CD14-positive monocyte (primary cell): ENCODE measurements at regions of chr9 and their contacts with region 1.

Region 1: GRCh38 chr9:133335878-133336811 is at the start of gene SURF6:
- DNase-seq: peak; percentile 80 to 87 (median 85)
- H3K4me3 ChIP-seq: peak within 1 kb of the TSS; percentile 64 to 92 (median 89)
- H3K4me3 Mint-ChIP-seq: peak within 1 kb of the TSS; percentile 95 to 98
- H3K27ac ChIP-seq: peak within 1 kb of the TSS; percentile 64 to 90
- H3K27ac Mint-ChIP-seq: peak within 1 kb of the TSS; percentile 87 to 95 (median 94)
- H3K4me1 ChIP-seq: peaks cover 46 to 64% of the 10 kb centered on the region in 2 donors
- H3K4me1 Mint-ChIP-seq: peaks cover 58% of the 10 kb centered on the region
- H3K27me3 ChIP-seq: no peaks in the 10 kb centered on the region
- H3K27me3 Mint-ChIP-seq: no peaks in the 10 kb centered on the region
- CTCF ChIP-seq: no peak
- polyA plus RNA-seq, gene SURF6: 0.75 to 12.9 (median 2.9) TPM

Region 2: DNA sequence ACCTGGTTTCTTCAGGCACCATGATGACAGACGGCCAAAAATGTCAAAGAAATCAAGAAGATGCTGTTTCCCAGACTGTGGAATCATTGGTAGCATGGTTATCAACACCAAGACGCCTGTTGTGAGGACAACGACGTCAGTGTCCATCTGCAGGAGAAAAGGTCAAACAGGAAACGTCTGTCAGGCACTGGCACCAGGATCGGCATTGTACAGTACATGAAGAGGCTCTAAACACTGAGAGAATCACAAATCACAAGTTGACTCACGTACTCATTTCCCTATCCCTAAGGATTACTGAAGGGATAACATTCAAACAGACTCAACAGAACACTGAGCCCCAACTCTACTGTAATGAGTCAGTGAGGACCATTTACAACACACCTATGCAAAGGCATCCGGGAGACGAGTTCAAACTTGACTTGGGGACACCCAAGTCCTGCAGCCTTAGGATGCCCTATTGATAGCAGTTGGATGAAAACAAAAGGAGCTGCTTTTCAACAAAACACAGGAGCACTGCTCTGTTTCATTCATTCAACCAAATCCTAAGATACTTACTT is 412.7 kb before region 1 on chr9:
- intact Hi-C with region 1: no loop called
- DNase-seq: no peak
- H3K4me3 ChIP-seq: no peak overlapping the region
- H3K4me3 Mint-ChIP-seq: no peak overlapping the region
- H3K27ac ChIP-seq: no peak overlapping the region
- H3K27ac Mint-ChIP-seq: no peak overlapping the region
- H3K4me1 ChIP-seq: no peaks in the 10 kb centered on the region
- H3K4me1 Mint-ChIP-seq: no peaks in the 10 kb centered on the region
- H3K27me3 ChIP-seq: no peaks in the 10 kb centered on the region
- H3K27me3 Mint-ChIP-seq: no peaks in the 10 kb centered on the region
- CTCF ChIP-seq: no peak

Region 3: DNA sequence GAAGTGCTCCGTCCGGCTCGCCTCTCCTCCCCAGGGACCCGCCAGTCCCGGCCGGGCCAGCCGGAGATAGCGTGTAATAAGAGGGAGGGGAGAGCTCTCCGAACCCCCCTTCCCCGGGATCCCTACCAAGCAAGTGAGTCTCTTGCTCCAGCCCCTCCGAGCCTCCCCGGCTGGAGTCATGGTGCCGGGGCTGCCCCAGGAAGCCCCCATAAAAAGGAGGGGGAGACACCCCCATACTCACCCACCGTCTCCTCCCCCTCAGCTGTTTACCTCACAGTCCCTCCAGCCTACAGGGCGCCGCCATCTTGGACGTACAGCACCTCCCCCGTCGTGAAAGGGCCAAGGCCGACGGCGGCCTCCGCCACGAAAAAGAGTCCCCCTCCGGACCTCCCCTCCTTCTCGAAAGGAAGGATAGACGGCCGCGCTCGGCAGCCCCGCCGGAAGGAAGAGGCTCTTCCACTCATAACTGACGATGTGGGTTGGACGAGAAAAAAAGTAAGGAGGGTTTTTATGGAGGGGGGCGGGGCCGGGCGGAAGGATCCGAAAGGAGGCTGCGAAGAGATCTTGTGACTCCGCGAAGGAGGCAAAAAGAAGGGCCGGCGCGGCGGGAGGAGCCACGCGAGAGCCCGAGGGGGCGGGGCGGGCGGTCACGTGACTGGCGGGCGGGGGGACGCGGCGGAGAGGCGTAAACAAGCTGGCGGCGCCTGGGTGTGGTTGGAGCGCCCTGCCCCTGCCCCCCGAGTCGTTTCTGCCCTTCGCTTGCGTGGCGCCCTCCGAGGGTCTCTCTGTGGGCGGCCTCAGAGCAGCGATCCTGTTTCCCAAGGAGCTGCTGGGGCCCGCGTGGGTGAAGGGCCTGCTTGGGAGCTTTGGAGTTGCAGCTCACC is 391.6 kb before region 1 on chr9 and contains the start of gene TSC1:
- intact Hi-C with region 1: loop called in 1 of 2 experiments (anchors 10 kb)
- DNase-seq: peak; percentile 86 to 95 (median 92)
- H3K4me3 ChIP-seq: peak within 1 kb of the TSS; percentile 86 to 99 (median 99)
- H3K4me3 Mint-ChIP-seq: peak within 1 kb of the TSS; percentile 85 to 98
- H3K27ac ChIP-seq: peak within 1 kb of the TSS; percentile 93 to 99
- H3K27ac Mint-ChIP-seq: peak within 1 kb of the TSS; percentile 99 to 100 (median 100)
- H3K4me1 ChIP-seq: peaks cover 16 to 20% of the 10 kb centered on the region in 2 donors
- H3K4me1 Mint-ChIP-seq: peaks cover 20% of the 10 kb centered on the region
- H3K27me3 ChIP-seq: no peaks in the 10 kb centered on the region
- H3K27me3 Mint-ChIP-seq: peaks cover 0 to 3% (median 0%) of the 10 kb centered on the region in 3 donors
- CTCF ChIP-seq: no peak
- polyA plus RNA-seq, gene TSC1: 3.3 to 43.0 (median 5.8) TPM

Region 4: GRCh38 chr9:133184962-133185361 is 151.2 kb before region 1 on chr9:
- intact Hi-C with region 1: loop called in 1 of 2 experiments (anchors 10 kb)
- DNase-seq: peak; percentile 37 to 44 (median 42)
- H3K4me3 ChIP-seq: no peak overlapping the region
- H3K4me3 Mint-ChIP-seq: peak overlapping the region in 1 of 2 donors; percentile 30
- H3K27ac ChIP-seq: no peak overlapping the region
- H3K27ac Mint-ChIP-seq: no peak overlapping the region
- H3K4me1 ChIP-seq: peaks cover 6 to 15% of the 10 kb centered on the region in 2 donors
- H3K4me1 Mint-ChIP-seq: peaks cover 15% of the 10 kb centered on the region
- H3K27me3 ChIP-seq: peaks cover 0 to 9% of the 10 kb centered on the region in 2 donors
- H3K27me3 Mint-ChIP-seq: peaks cover 7 to 16% (median 15%) of the 10 kb centered on the region in 3 donors
- CTCF ChIP-seq: peak; percentile 43

Region 5: DNA sequence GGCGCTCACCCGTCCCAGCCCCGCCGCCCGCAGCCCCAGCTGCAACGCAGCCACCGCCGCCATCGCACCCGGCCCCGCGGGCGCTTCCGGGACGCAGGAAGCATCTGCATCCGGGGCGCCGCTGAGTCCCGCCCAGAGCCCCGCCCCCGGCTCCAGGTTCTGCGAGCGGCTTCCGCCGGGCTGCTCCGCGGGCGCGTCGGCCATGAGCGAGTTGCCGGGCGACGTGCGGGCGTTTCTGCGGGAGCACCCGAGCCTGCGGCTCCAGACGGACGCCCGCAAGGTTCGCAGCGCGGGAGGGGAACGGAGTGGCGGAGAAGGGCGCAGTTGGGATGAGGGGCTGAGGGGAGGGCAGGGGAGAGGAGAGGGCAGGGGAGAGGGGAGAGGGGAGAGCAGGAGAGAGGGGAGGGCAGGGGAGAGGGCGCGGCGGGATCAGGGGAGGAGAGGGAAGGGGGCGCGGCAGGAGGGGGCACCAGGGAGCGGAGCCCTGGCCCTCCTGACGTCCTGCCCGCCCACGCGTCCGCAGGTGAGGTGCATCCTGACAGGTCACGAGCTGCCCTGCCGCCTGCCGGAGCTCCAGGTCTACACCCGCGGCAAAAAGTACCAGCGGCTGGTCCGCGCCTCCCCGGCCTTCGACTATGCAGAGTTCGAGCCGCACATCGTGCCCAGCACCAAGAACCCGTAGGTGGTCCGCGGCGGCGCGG is 20.4 kb after region 1 on chr9 and contains the starts of genes SURF1 and SURF2:
- intact Hi-C with region 1: no loop called
- DNase-seq: peak; percentile 72 to 82 (median 76)
- H3K4me3 ChIP-seq: peak within 1 kb of the TSS; percentile 70 to 89 (median 71)
- H3K4me3 Mint-ChIP-seq: peak within 1 kb of the TSS; percentile 83 to 89
- H3K27ac ChIP-seq: peak within 1 kb of the TSS; percentile 38 to 75
- H3K27ac Mint-ChIP-seq: peak within 1 kb of the TSS; percentile 33 to 91 (median 86)
- H3K4me1 ChIP-seq: peaks cover 29 to 35% of the 10 kb centered on the region in 2 donors
- H3K4me1 Mint-ChIP-seq: peaks cover 42% of the 10 kb centered on the region
- H3K27me3 ChIP-seq: no peaks in the 10 kb centered on the region
- H3K27me3 Mint-ChIP-seq: peaks cover 0 to 2% (median 2%) of the 10 kb centered on the region in 3 donors
- CTCF ChIP-seq: no peak
- polyA plus RNA-seq, gene SURF1: 60.5 to 140 (median 98.4) TPM
- polyA plus RNA-seq, gene SURF2: 17.5 to 24.7 (median 17.6) TPM

Region 6: GRCh38 chr9:133375724-133376654 is 39.8 kb after region 1 on chr9 and contains the starts of genes STKLD1 and SURF4:
- intact Hi-C with region 1: loop called in 1 of 2 experiments (anchors 2 kb)
- DNase-seq: peak; percentile 89 to 93 (median 90)
- H3K4me3 ChIP-seq: peak within 1 kb of the TSS; percentile 65 to 95 (median 86)
- H3K4me3 Mint-ChIP-seq: peak within 1 kb of the TSS; percentile 94 to 97
- H3K27ac ChIP-seq: peak within 1 kb of the TSS; percentile 71 to 83
- H3K27ac Mint-ChIP-seq: peak within 1 kb of the TSS; percentile 89 to 96 (median 94)
- H3K4me1 ChIP-seq: peaks cover 21 to 56% of the 10 kb centered on the region in 2 donors
- H3K4me1 Mint-ChIP-seq: peaks cover 54% of the 10 kb centered on the region
- H3K27me3 ChIP-seq: no peaks in the 10 kb centered on the region
- H3K27me3 Mint-ChIP-seq: peaks cover 0 to 5% (median 3%) of the 10 kb centered on the region in 3 donors
- CTCF ChIP-seq: no peak
- polyA plus RNA-seq, gene STKLD1: 0.27 TPM in 1 of 3 donors, not detected in the others
- polyA plus RNA-seq, gene SURF4: 61.4 to 175 (median 157) TPM

Region 7: DNA sequence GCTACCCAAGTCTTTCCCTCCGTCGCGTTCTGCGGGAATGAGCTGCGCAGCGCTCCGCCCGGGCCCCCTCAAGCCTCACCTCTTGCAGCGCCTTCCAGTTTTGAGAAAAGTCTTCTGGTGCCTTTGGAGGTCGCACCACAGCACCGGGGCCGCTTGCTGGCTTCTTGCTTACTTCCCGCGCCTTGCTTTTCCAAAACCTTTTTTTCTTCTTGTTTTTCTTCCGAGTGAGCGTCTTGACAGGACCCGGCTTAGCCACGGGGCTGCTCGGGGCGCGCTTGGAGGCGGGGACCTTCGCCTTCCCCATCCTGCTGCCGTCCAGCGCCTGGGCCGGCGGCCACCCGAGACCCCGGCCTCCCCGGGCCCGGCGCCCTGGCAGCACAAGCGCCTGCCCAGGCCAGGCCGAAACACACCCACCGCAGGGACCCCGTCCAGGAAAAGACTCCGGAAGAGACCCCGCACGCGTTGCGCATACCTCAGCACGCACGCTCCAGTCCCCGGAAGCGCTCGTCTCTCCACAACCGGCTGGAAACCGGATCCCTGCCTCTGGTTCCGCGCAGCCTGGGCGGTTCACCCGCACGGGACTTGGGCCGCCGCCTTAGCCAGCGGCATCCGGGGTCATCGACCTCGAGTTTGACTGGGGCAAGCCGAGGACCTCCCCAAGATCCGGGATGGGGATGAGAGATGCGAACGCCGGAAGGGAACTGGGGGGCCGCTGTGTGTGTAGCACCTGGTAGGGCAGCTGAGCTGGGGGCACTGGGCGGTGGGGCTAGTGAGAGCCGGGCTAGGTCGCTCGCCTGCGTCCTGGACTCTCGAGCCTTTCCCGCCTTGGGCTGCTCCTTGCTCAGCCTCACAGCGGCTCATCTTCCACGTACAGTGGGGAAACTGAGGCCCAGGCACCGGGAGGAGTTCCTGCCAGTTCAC is 81.7 kb after region 1 on chr9 and contains the start of gene REXO4:
- intact Hi-C with region 1: loop called in 1 of 2 experiments (anchors 5 kb)
- DNase-seq: peak; percentile 75 to 78 (median 77)
- H3K4me3 ChIP-seq: peak within 1 kb of the TSS; percentile 58 to 94 (median 83)
- H3K4me3 Mint-ChIP-seq: peak within 1 kb of the TSS; percentile 92 to 96
- H3K27ac ChIP-seq: peak within 1 kb of the TSS; percentile 75 to 82
- H3K27ac Mint-ChIP-seq: peak within 1 kb of the TSS; percentile 73 to 93 (median 86)
- H3K4me1 ChIP-seq: peaks cover 21 to 26% of the 10 kb centered on the region in 2 donors
- H3K4me1 Mint-ChIP-seq: peaks cover 34% of the 10 kb centered on the region
- H3K27me3 ChIP-seq: no peaks in the 10 kb centered on the region
- H3K27me3 Mint-ChIP-seq: peaks cover 0 to 4% (median 1%) of the 10 kb centered on the region in 3 donors
- CTCF ChIP-seq: no peak
- polyA plus RNA-seq, gene REXO4: 3.0 to 11.0 (median 4.2) TPM

Region 8: DNA sequence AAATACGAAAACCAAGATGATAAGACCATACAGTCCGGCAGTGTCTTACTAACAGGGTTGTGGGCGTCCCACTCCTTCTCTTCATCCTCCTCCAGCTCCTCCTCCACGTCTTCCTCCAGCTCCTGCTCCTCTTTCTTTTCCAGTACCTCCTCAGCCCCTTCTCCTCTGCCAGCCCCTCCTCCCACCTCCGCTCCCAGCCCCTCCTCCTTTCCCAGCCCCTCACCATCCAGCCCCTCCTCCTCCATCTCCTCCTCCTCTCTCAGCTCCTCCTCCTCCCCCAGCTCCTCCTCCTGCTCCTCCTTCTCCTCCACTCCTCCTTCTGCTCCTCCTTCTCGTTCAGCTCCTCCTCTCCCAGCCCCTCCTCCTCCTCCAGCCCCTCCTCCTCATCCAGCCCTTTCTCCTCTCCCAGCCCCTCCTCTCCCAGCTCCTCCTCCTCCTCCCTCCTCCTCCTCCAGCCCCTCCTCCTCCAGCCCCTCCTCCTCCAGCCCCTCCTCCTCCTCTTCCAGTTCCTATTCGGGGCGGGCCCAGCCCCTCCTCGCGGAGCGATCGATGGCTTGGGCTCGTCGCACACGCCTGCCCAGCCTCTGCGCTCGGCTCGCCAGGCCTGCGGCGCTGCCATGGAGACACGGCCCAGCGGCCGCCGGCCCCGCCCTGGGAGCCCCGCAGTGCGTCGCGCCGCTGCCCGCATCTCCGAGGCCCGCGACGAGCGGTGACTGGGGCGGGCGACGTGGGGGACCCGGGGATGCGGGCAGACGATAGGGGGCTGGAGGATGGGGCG is 688.9 kb after region 1 on chr9 and contains the start of gene BRD3OS:
- intact Hi-C with region 1: loop called in 1 of 2 experiments (anchors 5 kb)
- DNase-seq: peak; percentile 95 to 99 (median 99)
- H3K4me3 ChIP-seq: peak within 1 kb of the TSS; percentile 63 to 80 (median 70)
- H3K4me3 Mint-ChIP-seq: peak within 1 kb of the TSS; percentile 77 to 88
- H3K27ac ChIP-seq: no peak within 1 kb of the TSS
- H3K27ac Mint-ChIP-seq: peak within 1 kb of the TSS in 5 of 7 donors; percentile 24 to 89 (median 50)
- H3K4me1 ChIP-seq: peaks cover 12 to 13% of the 10 kb centered on the region in 2 donors
- H3K4me1 Mint-ChIP-seq: peaks cover 13% of the 10 kb centered on the region
- H3K27me3 ChIP-seq: no peaks in the 10 kb centered on the region
- H3K27me3 Mint-ChIP-seq: peaks cover 0 to 3% (median 1%) of the 10 kb centered on the region in 3 donors
- CTCF ChIP-seq: no peak
- polyA plus RNA-seq, gene BRD3OS: 2.9 to 6.8 (median 6.6) TPM